ENCODE measurements at regions of chr11 and their contacts with region 1.

Region 1: GRCh38 chr11:96704847-96705246 is 315.0 kb downstream of the JRKL start:
- ATAC-seq: no peak
- H3K4me3 ChIP-seq: no peak overlapping the region
- H3K27ac ChIP-seq: no peak overlapping the region
- H3K4me1 ChIP-seq: peaks cover 5 to 37% of the 10 kb centered on the region in 2 donors

Region 2: GRCh38 chr11:96357794-96358193 is 347.1 kb before region 1 on chr11:
- in situ Hi-C with region 1: no loop called
- ATAC-seq: no peak
- H3K4me3 ChIP-seq: no peak overlapping the region
- H3K27ac ChIP-seq: no peak overlapping the region
- H3K4me1 ChIP-seq: no peaks in the 10 kb centered on the region

Region 3: GRCh38 chr11:96817488-96817887 is 112.6 kb after region 1 on chr11:
- in situ Hi-C with region 1: loop called in 1 of 9 experiments (anchors 25 kb)
- ATAC-seq: peak in 5 of 8 experiments; percentile 22 to 59 (median 54)
- H3K4me3 ChIP-seq: no peak overlapping the region
- H3K27ac ChIP-seq: no peak overlapping the region
- H3K4me1 ChIP-seq: peaks cover 0 to 28% of the 10 kb centered on the region in 2 donors